Mammary epithelial cell (primary cell): ENCODE measurements at regions of chr5 and their contacts with region 1.

Region 1: DNA sequence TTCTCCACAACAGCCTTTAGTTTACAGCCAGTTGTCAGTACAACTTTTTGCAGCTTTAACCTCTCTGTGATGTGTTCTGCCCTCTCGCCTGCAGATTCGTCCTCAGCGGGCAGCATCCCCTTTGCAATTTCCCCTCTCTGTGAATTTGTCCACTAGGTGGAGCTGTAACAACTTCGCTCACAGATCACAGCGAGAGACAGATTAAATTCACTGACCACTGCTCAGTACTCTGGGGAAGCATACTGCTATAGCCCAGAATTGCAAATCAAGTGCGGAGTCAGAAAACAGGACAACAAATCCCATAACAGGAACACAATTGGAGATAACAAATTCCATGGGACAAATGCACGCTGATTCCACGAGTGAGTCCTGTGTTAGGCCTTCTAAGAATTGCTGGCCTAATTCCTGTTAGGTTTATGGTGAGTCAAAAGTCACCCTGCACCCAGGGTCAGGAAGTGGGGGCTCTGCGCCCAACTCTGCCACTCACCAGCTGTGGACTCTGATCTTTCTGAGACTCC is 2124.9 kb downstream of the MAT2B start:
- DNase-seq: peak; percentile 19
- H3K4me3 ChIP-seq: no peak overlapping the region
- H3K27ac ChIP-seq: no peak overlapping the region
- H3K4me1 ChIP-seq: no peaks in the 10 kb centered on the region
- H3K27me3 ChIP-seq: no peaks in the 10 kb centered on the region
- CTCF ChIP-seq: peak; percentile 79

Region 2: DNA sequence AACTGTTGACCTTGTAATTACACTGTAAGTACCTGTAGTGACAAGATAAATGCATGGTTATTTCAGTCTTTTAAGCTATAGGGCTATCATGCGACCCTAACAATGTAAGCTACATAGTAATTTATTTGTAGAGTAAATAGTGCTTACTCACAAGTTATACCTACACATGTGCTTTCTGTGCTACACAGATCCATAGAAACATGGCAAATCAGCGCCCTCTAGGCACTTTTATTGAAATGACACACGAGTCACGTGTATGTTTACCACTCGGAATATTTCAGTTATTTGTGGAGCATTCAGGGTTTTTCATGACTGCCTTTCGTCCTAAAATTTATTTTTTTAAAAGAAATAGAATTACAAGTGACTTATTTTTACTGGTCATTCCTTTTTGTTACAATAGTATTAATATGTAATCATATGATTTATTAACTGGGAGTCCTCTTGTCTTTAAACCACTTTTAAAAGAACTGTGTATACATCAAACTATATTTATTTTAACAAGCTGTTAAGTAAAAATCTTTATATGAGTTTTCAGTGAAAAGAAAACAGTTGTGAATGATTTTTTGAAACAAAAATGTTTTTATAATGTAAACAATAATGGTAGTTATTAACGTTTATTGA is 1418.8 kb after region 1 on chr5:
- CTCF ChIA-PET with region 1: no interaction called
- dilution Hi-C with region 1: no loop called
- in situ Hi-C with region 1: no loop called
- intact Hi-C with region 1: loop called (anchors 2 kb)
- DNase-seq: peak; percentile 32
- H3K4me3 ChIP-seq: no peak overlapping the region
- H3K27ac ChIP-seq: no peak overlapping the region
- H3K4me1 ChIP-seq: no peaks in the 10 kb centered on the region
- H3K27me3 ChIP-seq: no peaks in the 10 kb centered on the region
- CTCF ChIP-seq: peak; percentile 71 to 75